GM12878 (cell line): ENCODE measurements at regions of chr4 and their contacts with region 1.

Region 1: DNA sequence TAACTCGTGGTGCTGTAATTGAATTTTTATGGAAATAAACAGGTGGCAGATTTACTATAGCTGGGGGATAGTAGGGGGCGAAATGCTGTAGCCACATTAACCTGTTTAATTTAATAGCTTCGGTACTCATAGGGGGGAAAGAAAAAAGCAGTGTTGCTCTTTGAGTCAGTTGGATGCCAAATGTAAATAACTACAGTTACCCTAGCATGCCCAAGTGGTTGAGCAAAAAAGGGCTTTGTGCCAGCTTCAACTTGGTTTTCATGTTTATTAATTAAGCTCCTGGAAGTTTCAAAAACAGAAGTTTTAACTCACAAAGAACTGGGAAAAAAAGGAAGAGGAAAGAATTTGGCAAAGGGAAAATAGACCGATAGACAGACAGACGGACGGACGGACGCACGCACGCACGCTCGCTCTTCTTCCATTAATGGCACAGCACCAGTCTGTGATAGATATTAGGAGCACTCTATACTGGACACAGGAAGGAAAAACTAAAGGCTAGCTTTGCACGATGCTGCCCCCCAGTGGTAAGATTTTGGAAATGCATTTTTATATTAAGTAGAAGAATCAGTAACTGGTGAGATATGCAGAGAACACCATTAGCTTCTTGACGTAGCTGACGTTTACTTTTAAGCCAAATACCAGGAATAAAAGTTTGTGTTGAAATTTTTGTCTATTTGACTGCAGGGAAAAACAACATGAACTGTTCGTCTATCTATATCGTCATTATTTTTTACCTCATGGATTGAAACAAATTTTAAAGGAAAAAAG is 151.8 kb downstream of the SLC7A11 start:
- DNase-seq: peak; percentile 17
- ATAC-seq: peak; percentile 94
- H3K4me3 ChIP-seq: no peak overlapping the region
- H3K27ac ChIP-seq: no peak overlapping the region
- H3K4me1 ChIP-seq: no peaks in the 10 kb centered on the region
- H3K27me3 ChIP-seq: no peaks in the 10 kb centered on the region; a peak in 1 of 4 replicates
- CTCF ChIP-seq: peak; percentile 68 to 77 (median 71)
- EP300 ChIP-seq: no peak
- POLR2A ChIP-seq: no peak
- RAD21 ChIP-seq: peak; percentile 73

Region 2: DNA sequence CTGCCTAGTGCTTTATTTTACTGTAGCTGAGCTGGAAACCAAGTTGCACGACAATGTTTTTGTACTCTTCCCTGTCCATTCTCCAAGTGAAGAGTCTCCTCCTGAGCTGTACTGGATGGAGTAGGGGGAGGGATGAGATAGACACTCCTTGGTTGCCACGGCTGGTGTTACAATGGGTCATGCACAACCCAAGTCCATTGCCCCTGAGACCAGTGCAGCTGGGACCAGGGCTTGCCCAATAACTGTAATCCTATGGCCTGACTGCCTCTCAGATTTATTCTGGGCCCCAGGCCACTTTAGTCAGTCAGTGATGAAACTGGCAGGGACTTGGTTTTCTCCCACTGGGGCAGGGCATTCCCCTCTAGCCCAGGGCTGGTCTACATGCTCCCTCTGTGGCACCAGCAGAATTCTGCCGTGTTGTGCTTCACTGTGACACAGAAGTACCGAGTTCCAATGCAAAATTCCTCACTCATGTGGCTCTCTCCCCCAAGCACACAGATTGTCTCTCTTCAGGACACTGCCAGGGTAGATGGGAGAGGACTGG is 354.7 kb before region 1 on chr4:
- CTCF ChIA-PET with region 1: no interaction called
- POLR2A ChIA-PET with region 1: no interaction called
- RAD21 ChIA-PET with region 1: no interaction called
- SMC1A ChIA-PET with region 1: no interaction called
- in situ Hi-C with region 1: no loop called
- intact Hi-C with region 1: loop called (anchors 10 kb)
- DNase-seq: no peak
- ATAC-seq: peak; percentile 75
- H3K4me3 ChIP-seq: no peak overlapping the region
- H3K27ac ChIP-seq: no peak overlapping the region
- H3K4me1 ChIP-seq: no peaks in the 10 kb centered on the region
- H3K27me3 ChIP-seq: no peaks in the 10 kb centered on the region
- CTCF ChIP-seq: peak in 1 of 3 experiments; percentile 23; a peak in 1 of 6 replicates
- EP300 ChIP-seq: no peak
- POLR2A ChIP-seq: no peak
- RAD21 ChIP-seq: no peak

Region 3: GRCh38 chr4:138035781-138036258 is 54.5 kb before region 1 on chr4:
- CTCF ChIA-PET with region 1: interaction called, 60 read pairs
- POLR2A ChIA-PET with region 1: no interaction called
- RAD21 ChIA-PET with region 1: interaction called, 19 read pairs
- SMC1A ChIA-PET with region 1: interaction called, 19 read pairs
- in situ Hi-C with region 1: no loop called
- intact Hi-C with region 1: loop called (anchors 1 kb)
- DNase-seq: peak; percentile 69
- ATAC-seq: peak; percentile 100
- H3K4me3 ChIP-seq: no peak overlapping the region
- H3K27ac ChIP-seq: no peak overlapping the region
- H3K4me1 ChIP-seq: no peaks in the 10 kb centered on the region
- H3K27me3 ChIP-seq: no peaks in the 10 kb centered on the region
- CTCF ChIP-seq: peak; percentile 44 to 71 (median 64); a peak in 5 of 6 replicates
- EP300 ChIP-seq: 0 out of 4 replicates have a peak, but pooled peaks of 1 of the 2 experiments have one; percentile 43
- POLR2A ChIP-seq: no peak
- RAD21 ChIP-seq: peak; percentile 86

Region 4: GRCh38 chr4:138078751-138079520 is 11.4 kb before region 1 on chr4:
- CTCF ChIA-PET with region 1: interaction called, 39 read pairs
- POLR2A ChIA-PET with region 1: no interaction called
- RAD21 ChIA-PET with region 1: no interaction called
- SMC1A ChIA-PET with region 1: interaction called, 7 read pairs
- in situ Hi-C with region 1: no loop called
- intact Hi-C with region 1: no loop called
- DNase-seq: no peak
- ATAC-seq: no peak
- H3K4me3 ChIP-seq: no peak overlapping the region
- H3K27ac ChIP-seq: no peak overlapping the region
- H3K4me1 ChIP-seq: no peaks in the 10 kb centered on the region
- H3K27me3 ChIP-seq: no peaks in the 10 kb centered on the region
- CTCF ChIP-seq: no peak
- EP300 ChIP-seq: no peak
- POLR2A ChIP-seq: no peak
- RAD21 ChIP-seq: no peak

Region 5: GRCh38 chr4:138138774-138139173 is 48.4 kb after region 1 on chr4:
- CTCF ChIA-PET with region 1: no interaction called
- POLR2A ChIA-PET with region 1: no interaction called
- RAD21 ChIA-PET with region 1: no interaction called
- SMC1A ChIA-PET with region 1: no interaction called
- in situ Hi-C with region 1: no loop called
- intact Hi-C with region 1: no loop called
- DNase-seq: no peak
- ATAC-seq: no peak
- H3K4me3 ChIP-seq: no peak overlapping the region
- H3K27ac ChIP-seq: no peak overlapping the region
- H3K4me1 ChIP-seq: no peaks in the 10 kb centered on the region
- H3K27me3 ChIP-seq: no peaks in the 10 kb centered on the region
- CTCF ChIP-seq: no peak
- EP300 ChIP-seq: no peak
- POLR2A ChIP-seq: no peak
- RAD21 ChIP-seq: no peak

Region 6: DNA sequence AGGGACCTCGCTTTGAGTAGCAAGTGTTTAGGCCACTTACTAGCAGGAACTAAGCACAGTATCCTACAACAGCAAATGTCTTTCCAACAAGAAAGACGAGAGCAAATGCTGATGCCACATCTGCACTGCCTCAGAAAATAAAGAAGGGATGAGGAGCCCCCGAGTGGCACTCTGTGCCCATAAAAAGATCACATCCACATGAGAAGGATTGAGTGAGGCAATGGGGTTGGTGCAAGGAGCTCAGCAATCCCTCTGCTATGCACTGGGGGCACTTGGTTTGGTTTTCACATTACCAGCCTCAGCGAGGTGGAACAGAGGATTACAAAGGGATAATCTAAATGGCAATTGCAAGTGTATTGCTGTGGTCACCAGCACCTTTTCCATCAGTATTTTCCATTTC is 404.6 kb after region 1 on chr4:
- CTCF ChIA-PET with region 1: interaction called, 13 read pairs
- POLR2A ChIA-PET with region 1: no interaction called
- RAD21 ChIA-PET with region 1: interaction called, 3 read pairs
- SMC1A ChIA-PET with region 1: interaction called, 13 read pairs
- in situ Hi-C with region 1: no loop called
- intact Hi-C with region 1: no loop called
- DNase-seq: peak; percentile 4
- ATAC-seq: peak; percentile 93
- H3K4me3 ChIP-seq: no peak overlapping the region
- H3K27ac ChIP-seq: no peak overlapping the region
- H3K4me1 ChIP-seq: no peaks in the 10 kb centered on the region
- H3K27me3 ChIP-seq: no peaks in the 10 kb centered on the region
- CTCF ChIP-seq: peak; percentile 17 to 37 (median 34); a peak in 3 of 6 replicates
- EP300 ChIP-seq: no peak
- POLR2A ChIP-seq: no peak
- RAD21 ChIP-seq: peak; percentile 49

Region 7: DNA sequence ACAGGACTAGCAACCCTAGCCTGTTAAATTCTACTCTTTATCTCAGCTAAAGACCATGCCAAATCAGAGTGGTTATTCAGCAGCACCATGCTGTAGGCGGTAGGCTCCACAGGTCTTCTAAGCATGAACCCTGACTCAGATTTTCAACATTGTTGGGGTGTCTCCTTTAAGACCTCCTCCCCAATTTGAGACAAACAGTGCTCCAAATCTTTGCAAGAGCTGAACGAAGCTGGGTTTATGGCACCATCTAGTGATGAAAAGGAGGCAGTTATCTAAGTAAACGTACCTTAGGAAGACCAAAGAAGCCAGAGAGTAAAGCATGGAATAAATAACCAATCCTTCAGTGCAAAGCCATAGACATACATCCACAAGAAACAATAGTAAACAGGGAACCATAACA is 486.4 kb after region 1 on chr4:
- CTCF ChIA-PET with region 1: interaction called, 4 read pairs
- POLR2A ChIA-PET with region 1: no interaction called
- RAD21 ChIA-PET with region 1: no interaction called
- SMC1A ChIA-PET with region 1: no interaction called
- in situ Hi-C with region 1: no loop called
- intact Hi-C with region 1: loop called (anchors 5 kb)
- DNase-seq: no peak
- ATAC-seq: peak; percentile 71
- H3K4me3 ChIP-seq: no peak overlapping the region
- H3K27ac ChIP-seq: no peak overlapping the region
- H3K4me1 ChIP-seq: no peaks in the 10 kb centered on the region
- H3K27me3 ChIP-seq: no peaks in the 10 kb centered on the region
- CTCF ChIP-seq: peak in 2 of 3 experiments; percentile 34 to 41; a peak in 4 of 6 replicates
- EP300 ChIP-seq: no peak
- POLR2A ChIP-seq: no peak
- RAD21 ChIP-seq: peak; percentile 60